ENCODE measurements at regions of chr9 and their contacts with region 1.

Region 1: GRCh38 chr9:557601-558201 is 283.8 kb upstream of the DMRT1 start:
- DNase-seq: peak; percentile 89
- H3K4me3 ChIP-seq: no peak overlapping the region
- H3K27ac ChIP-seq: peak overlapping the region; percentile 41
- H3K4me1 ChIP-seq: peaks cover 36% of the 10 kb centered on the region
- H3K27me3 ChIP-seq: no peaks in the 10 kb centered on the region
- CTCF ChIP-seq: no peak

Region 2: GRCh38 chr9:459491-460444 is 97.9 kb before region 1 on chr9:
- CTCF ChIA-PET with region 1: no interaction called
- dilution Hi-C with region 1: loop called (anchors 5 kb)
- in situ Hi-C with region 1: no loop called
- intact Hi-C with region 1: no loop called
- DNase-seq: no peak
- H3K4me3 ChIP-seq: no peak overlapping the region
- H3K27ac ChIP-seq: no peak overlapping the region
- H3K4me1 ChIP-seq: no peaks in the 10 kb centered on the region
- H3K27me3 ChIP-seq: no peaks in the 10 kb centered on the region
- CTCF ChIP-seq: no peak

Region 3: GRCh38 chr9:607417-607816 is 49.7 kb after region 1 on chr9:
- CTCF ChIA-PET with region 1: no interaction called
- dilution Hi-C with region 1: no loop called
- in situ Hi-C with region 1: no loop called
- intact Hi-C with region 1: loop called (anchors 2 kb)
- DNase-seq: peak; percentile 90
- H3K4me3 ChIP-seq: no peak overlapping the region
- H3K27ac ChIP-seq: peak overlapping the region; percentile 86
- H3K4me1 ChIP-seq: peaks cover 19% of the 10 kb centered on the region
- H3K27me3 ChIP-seq: no peaks in the 10 kb centered on the region
- CTCF ChIP-seq: no peak

Measured in mammary epithelial cell (primary cell).